ENCODE measurements at regions of chr5 and their contacts with region 1.

Region 1: GRCh38 chr5:17282283-17283120 is 65.1 kb downstream of the BASP1 start:
- DNase-seq: peak; percentile 91
- ATAC-seq: peak; percentile 95
- H3K4me3 ChIP-seq: peak overlapping the region; percentile 55
- H3K27ac ChIP-seq: peak overlapping the region; percentile 71
- H3K4me1 ChIP-seq: peaks cover 18% of the 10 kb centered on the region
- H3K27me3 ChIP-seq: no peaks in the 10 kb centered on the region
- CTCF ChIP-seq: no peak; a peak in 1 of 6 replicates
- EP300 ChIP-seq: peak; percentile 45 to 61; a peak in 3 of 4 replicates
- POLR2A ChIP-seq: no peak
- RAD21 ChIP-seq: no peak; the same call in 1 of the 2 replicates

Region 2: GRCh38 chr5:16025681-16026080 is 1256.8 kb before region 1 on chr5:
- CTCF ChIA-PET with region 1: no interaction called
- POLR2A ChIA-PET with region 1: no interaction called
- RAD21 ChIA-PET with region 1: no interaction called
- SMC1A ChIA-PET with region 1: no interaction called
- in situ Hi-C with region 1: no loop called
- intact Hi-C with region 1: no loop called
- DNase-seq: no peak
- ATAC-seq: no peak
- H3K4me3 ChIP-seq: no peak overlapping the region
- H3K27ac ChIP-seq: no peak overlapping the region
- H3K4me1 ChIP-seq: no peaks in the 10 kb centered on the region
- H3K27me3 ChIP-seq: no peaks in the 10 kb centered on the region
- CTCF ChIP-seq: no peak
- EP300 ChIP-seq: no peak
- POLR2A ChIP-seq: no peak
- RAD21 ChIP-seq: no peak

Region 3: GRCh38 chr5:17143335-17143734 is 139.2 kb before region 1 on chr5:
- CTCF ChIA-PET with region 1: no interaction called
- POLR2A ChIA-PET with region 1: no interaction called
- RAD21 ChIA-PET with region 1: no interaction called
- SMC1A ChIA-PET with region 1: no interaction called
- in situ Hi-C with region 1: no loop called
- intact Hi-C with region 1: no loop called
- DNase-seq: no peak
- ATAC-seq: no peak
- H3K4me3 ChIP-seq: no peak overlapping the region
- H3K27ac ChIP-seq: no peak overlapping the region
- H3K4me1 ChIP-seq: no peaks in the 10 kb centered on the region
- H3K27me3 ChIP-seq: no peaks in the 10 kb centered on the region
- CTCF ChIP-seq: no peak
- EP300 ChIP-seq: no peak
- POLR2A ChIP-seq: no peak
- RAD21 ChIP-seq: no peak

Region 4: GRCh38 chr5:17221843-17222636 is 60.5 kb before region 1 on chr5:
- CTCF ChIA-PET with region 1: interaction called, 4 read pairs
- POLR2A ChIA-PET with region 1: interaction called, 28 read pairs
- RAD21 ChIA-PET with region 1: interaction called, 53 read pairs
- SMC1A ChIA-PET with region 1: interaction called, 27 read pairs
- in situ Hi-C with region 1: loop called (anchors 5 kb)
- intact Hi-C with region 1: loop called (anchors 2 kb)
- DNase-seq: no peak
- ATAC-seq: peak; percentile 33
- H3K4me3 ChIP-seq: peak overlapping the region; percentile 17; the same call in 1 of the 2 replicates
- H3K27ac ChIP-seq: peak overlapping the region; percentile 40
- H3K4me1 ChIP-seq: peaks cover 30% of the 10 kb centered on the region; the same call in 1 of the 2 replicates
- H3K27me3 ChIP-seq: no peaks in the 10 kb centered on the region
- CTCF ChIP-seq: no peak
- EP300 ChIP-seq: no peak
- POLR2A ChIP-seq: no peak
- RAD21 ChIP-seq: no peak

Region 5: GRCh38 chr5:17359451-17360011 is 77.0 kb after region 1 on chr5:
- CTCF ChIA-PET with region 1: no interaction called
- POLR2A ChIA-PET with region 1: no interaction called
- RAD21 ChIA-PET with region 1: no interaction called
- SMC1A ChIA-PET with region 1: no interaction called
- in situ Hi-C with region 1: no loop called
- intact Hi-C with region 1: no loop called
- DNase-seq: no peak
- ATAC-seq: no peak
- H3K4me3 ChIP-seq: no peak overlapping the region
- H3K27ac ChIP-seq: no peak overlapping the region
- H3K4me1 ChIP-seq: no peaks in the 10 kb centered on the region
- H3K27me3 ChIP-seq: no peaks in the 10 kb centered on the region
- CTCF ChIP-seq: no peak
- EP300 ChIP-seq: no peak
- POLR2A ChIP-seq: no peak
- RAD21 ChIP-seq: no peak

Region 6: GRCh38 chr5:17411436-17412402 is 129.2 kb after region 1 on chr5:
- CTCF ChIA-PET with region 1: no interaction called
- POLR2A ChIA-PET with region 1: no interaction called
- RAD21 ChIA-PET with region 1: no interaction called
- SMC1A ChIA-PET with region 1: no interaction called
- in situ Hi-C with region 1: no loop called
- intact Hi-C with region 1: no loop called
- DNase-seq: no peak
- ATAC-seq: no peak
- H3K4me3 ChIP-seq: no peak overlapping the region
- H3K27ac ChIP-seq: no peak overlapping the region
- H3K4me1 ChIP-seq: no peaks in the 10 kb centered on the region
- H3K27me3 ChIP-seq: no peaks in the 10 kb centered on the region; a peak in 1 of 4 replicates
- CTCF ChIP-seq: no peak
- EP300 ChIP-seq: no peak
- POLR2A ChIP-seq: no peak
- RAD21 ChIP-seq: no peak